Breast epithelium (tissue), 4 donors: ENCODE measurements at regions of chr15 and their contacts with region 1.

Region 1: GRCh38 chr15:49627407-49627877 is 6.6 kb downstream of the DTWD1 start:
- DNase-seq: no peak
- H3K4me3 ChIP-seq: no peak overlapping the region
- H3K27ac ChIP-seq: no peak overlapping the region
- H3K4me1 ChIP-seq: peaks cover 0 to 8% of the 10 kb centered on the region in 2 donors
- H3K27me3 ChIP-seq: no peaks in the 10 kb centered on the region
- CTCF ChIP-seq: no peak
- POLR2A ChIP-seq: no peak

Region 2: GRCh38 chr15:49052662-49053061 is 574.8 kb before region 1 on chr15:
- intact Hi-C with region 1: loop called (anchors 5 kb)
- DNase-seq: no peak
- H3K4me3 ChIP-seq: no peak overlapping the region
- H3K27ac ChIP-seq: no peak overlapping the region
- H3K4me1 ChIP-seq: no peaks in the 10 kb centered on the region
- H3K27me3 ChIP-seq: no peaks in the 10 kb centered on the region
- CTCF ChIP-seq: no peak
- POLR2A ChIP-seq: no peak

Region 3: DNA sequence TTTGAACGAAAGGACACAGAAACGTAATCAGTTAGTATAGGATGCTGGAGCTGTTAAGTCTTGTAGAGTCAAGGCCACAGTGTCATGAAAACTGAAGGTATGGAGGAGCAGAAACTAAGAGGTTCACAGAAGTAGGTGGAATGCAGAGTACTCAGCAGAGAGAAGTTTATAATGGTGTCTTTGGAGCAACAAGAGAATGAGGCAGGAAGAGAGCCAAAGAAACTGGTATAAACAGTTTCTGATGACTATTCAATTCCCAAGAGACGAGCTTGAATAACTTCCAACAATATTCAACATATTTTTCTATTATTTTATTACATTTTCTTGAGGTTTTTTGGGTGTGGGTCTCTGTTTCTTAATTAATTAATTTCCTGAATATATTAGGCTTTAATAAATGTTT is 427.8 kb before region 1 on chr15:
- intact Hi-C with region 1: no loop called
- DNase-seq: no peak
- H3K4me3 ChIP-seq: no peak overlapping the region
- H3K27ac ChIP-seq: no peak overlapping the region
- H3K4me1 ChIP-seq: no peaks in the 10 kb centered on the region
- H3K27me3 ChIP-seq: no peaks in the 10 kb centered on the region
- CTCF ChIP-seq: no peak
- POLR2A ChIP-seq: no peak